ENCODE measurements at regions of chr3 and their contacts with region 1.

Region 1: DNA sequence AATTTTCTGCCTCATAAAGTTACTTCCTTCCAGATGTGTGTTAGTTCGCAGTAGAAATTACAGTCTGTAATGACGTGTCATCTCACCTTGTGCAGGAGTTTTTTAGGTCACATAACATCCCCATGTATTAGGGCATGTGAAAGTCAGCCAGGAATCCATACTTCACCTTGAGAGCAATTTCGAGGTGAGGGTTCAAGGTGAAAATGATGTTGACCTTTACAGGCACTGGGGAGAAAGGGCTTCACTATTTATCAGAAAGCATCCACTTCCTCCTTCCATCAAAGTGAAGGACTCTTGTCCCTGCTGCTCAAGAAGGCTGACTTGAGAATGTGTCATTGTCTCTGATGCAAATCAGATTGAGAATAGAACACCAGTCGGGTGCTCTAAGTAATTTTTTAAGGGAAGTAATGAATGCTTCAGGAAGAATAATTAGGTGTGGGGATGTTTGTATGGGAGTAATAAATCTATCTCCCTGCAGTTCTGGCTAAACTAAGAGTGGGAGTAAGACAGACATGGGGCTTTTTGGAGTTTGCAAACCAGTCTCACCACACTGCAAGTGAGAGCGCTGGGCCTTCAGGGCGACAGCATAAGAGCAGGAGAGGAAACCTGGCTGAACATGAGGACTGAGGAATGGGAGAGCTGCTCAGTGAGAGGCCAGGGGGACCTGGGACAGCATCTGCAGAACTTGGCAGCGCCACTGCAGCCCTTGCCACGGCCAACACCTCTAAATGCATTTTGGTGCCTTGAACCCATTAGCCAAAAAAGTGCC is 85.9 kb upstream of the IL12A start:
- DNase-seq: peak in 1 of 3 donors; percentile 31
- H3K4me3 ChIP-seq: no peak overlapping the region
- H3K27ac ChIP-seq: no peak overlapping the region
- H3K4me1 ChIP-seq: peaks cover 12 to 40% (median 22%) of the 10 kb centered on the region in 4 experiments
- H3K27me3 ChIP-seq: no peaks in the 10 kb centered on the region

Region 2: DNA sequence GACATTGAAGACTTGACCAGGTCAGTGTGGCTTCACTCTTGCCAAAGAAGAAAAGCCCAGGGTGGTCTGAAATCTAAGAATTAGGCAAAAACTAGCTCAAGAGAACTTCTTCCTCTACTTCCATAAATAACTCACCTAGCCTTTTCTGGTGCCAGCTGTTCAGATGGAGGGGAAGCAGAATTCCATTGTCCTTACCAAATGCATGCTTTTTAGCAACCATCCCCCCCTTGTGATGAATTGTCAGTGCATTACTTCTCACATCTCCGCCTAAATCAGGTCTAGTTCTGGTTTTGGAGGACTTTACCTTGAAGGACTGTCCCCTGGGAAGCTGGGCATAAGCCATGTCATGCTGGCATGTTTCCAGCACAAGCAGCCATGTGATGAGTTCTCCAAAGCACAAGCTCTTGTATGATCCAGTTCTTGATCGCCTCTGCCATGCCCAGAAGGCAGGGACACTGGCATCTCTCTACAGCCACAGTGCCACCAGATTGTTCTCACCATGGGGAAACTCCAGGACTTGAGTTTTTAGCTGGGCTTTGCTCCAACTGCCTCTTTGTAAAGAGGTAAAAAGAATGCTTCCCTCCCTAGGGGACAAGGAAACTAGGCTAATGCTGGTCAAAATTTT is 10.4 kb before region 1 on chr3:
- CTCF ChIA-PET with region 1: interaction called, 131 read pairs
- POLR2A ChIA-PET with region 1: no interaction called
- DNase-seq: no peak
- H3K4me3 ChIP-seq: no peak overlapping the region
- H3K27ac ChIP-seq: no peak overlapping the region
- H3K4me1 ChIP-seq: peaks cover 0 to 14% (median 8%) of the 10 kb centered on the region in 4 experiments
- H3K27me3 ChIP-seq: no peaks in the 10 kb centered on the region

Measured in common myeloid progenitor, CD34-positive (primary cell).